Right lobe of liver (tissue), 6 donors: ENCODE measurements at regions of chr13 and their contacts with region 1.

Region 1: DNA sequence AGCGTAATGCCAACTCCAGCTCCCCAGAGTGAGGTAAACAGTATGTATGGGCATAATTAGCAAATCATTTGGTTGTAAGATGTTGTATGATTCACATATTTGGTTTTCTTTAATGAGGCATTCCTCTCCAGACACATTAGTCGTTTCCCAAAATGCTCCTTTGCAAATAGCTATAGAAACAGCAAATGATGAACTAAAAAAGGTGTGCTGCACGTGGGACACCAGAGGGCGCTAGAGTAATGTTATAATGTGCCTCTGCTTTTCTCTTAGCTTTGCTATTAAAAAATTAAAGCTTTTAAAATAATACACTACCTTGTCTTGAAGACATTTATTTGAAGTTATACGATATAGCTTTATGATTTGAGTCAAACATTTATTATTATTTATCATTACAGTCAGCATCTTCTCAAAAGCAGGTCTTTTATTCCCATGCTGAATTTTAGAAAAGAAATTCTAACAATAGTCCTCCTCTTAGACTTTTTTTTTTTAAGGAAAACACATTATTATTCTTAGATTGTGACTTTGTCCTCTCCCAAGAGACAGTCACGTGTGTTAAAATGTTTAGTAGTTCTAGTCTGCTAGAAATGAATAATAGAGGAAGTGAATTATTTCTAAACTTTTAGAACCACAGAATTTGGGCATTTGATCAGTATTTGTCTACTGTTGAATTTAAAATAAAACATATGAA is 121.6 kb upstream of the FRY start:
- DNase-seq: peak in 1 of 3 donors; percentile 60
- ATAC-seq: peak; percentile 81 to 89 (median 84)
- H3K4me3 ChIP-seq: no peak overlapping the region
- H3K27ac ChIP-seq: no peak overlapping the region
- H3K4me1 ChIP-seq: peaks cover 0 to 8% (median 0%) of the 10 kb centered on the region in 4 donors
- H3K27me3 ChIP-seq: no peaks in the 10 kb centered on the region
- CTCF ChIP-seq: peak; percentile 90 to 93 (median 92)
- POLR2A ChIP-seq: no peak

Region 2: GRCh38 chr13:31686670-31687425 is 223.2 kb before region 1 on chr13:
- intact Hi-C with region 1: no loop called
- DNase-seq: no peak
- ATAC-seq: no peak
- H3K4me3 ChIP-seq: no peak overlapping the region
- H3K27ac ChIP-seq: no peak overlapping the region
- H3K4me1 ChIP-seq: peaks cover 0 to 4% (median 0%) of the 10 kb centered on the region in 4 donors
- H3K27me3 ChIP-seq: no peaks in the 10 kb centered on the region
- CTCF ChIP-seq: no peak
- POLR2A ChIP-seq: no peak

Region 3: GRCh38 chr13:31982539-31982938 is 72.5 kb after region 1 on chr13:
- intact Hi-C with region 1: loop called in 1 of 2 experiments (anchors 10 kb)
- DNase-seq: peak; percentile 69 to 89 (median 76)
- ATAC-seq: peak; percentile 65 to 87 (median 76)
- H3K4me3 ChIP-seq: no peak overlapping the region
- H3K27ac ChIP-seq: peak overlapping the region in 1 of 3 donors; percentile 79
- H3K4me1 ChIP-seq: peaks cover 0 to 36% (median 12%) of the 10 kb centered on the region in 4 donors
- H3K27me3 ChIP-seq: no peaks in the 10 kb centered on the region
- CTCF ChIP-seq: no peak
- POLR2A ChIP-seq: no peak

Region 4: DNA sequence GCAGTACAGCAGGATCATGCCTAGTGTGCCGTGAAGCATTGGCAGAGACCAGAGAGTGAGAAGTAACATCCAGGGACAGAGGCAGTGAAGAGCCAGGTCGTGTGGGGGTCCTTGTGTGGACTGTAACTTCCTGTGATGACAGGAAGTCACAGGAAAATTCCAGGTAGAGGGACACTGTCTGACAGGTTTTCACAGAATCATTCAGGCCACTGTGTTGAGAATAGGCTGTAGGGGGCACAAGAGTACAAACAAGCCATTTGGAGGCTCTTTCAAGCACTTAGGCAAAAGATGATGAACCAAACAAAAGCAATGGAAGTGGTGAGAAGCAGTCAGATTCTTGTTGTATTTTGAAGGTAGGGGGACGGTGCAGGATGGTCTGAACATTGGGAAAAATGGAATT is 471.5 kb after region 1 on chr13:
- intact Hi-C with region 1: no loop called
- DNase-seq: no peak
- ATAC-seq: peak; percentile 95 to 98 (median 97)
- H3K4me3 ChIP-seq: no peak overlapping the region
- H3K27ac ChIP-seq: no peak overlapping the region
- H3K4me1 ChIP-seq: no peaks in the 10 kb centered on the region
- H3K27me3 ChIP-seq: no peaks in the 10 kb centered on the region
- CTCF ChIP-seq: peak; percentile 56 to 69 (median 66)
- POLR2A ChIP-seq: no peak